Natural killer cell (primary cell): ENCODE measurements at regions of chr5 and their contacts with region 1.

Region 1: GRCh38 chr5:24351285-24351684 is 293.5 kb downstream of the CDH10 start:
- DNase-seq: no peak
- ATAC-seq: no peak
- H3K4me3 ChIP-seq: no peak overlapping the region
- H3K4me3 Mint-ChIP-seq: no peak overlapping the region
- H3K27ac ChIP-seq: no peak overlapping the region
- H3K27ac Mint-ChIP-seq: no peak overlapping the region
- H3K4me1 ChIP-seq: no peaks in the 10 kb centered on the region
- H3K4me1 Mint-ChIP-seq: no peaks in the 10 kb centered on the region
- H3K27me3 ChIP-seq: no peaks in the 10 kb centered on the region
- H3K27me3 Mint-ChIP-seq: no peaks in the 10 kb centered on the region
- CTCF ChIP-seq: no peak

Region 2: GRCh38 chr5:24368116-24368515 is 16.8 kb after region 1 on chr5:
- intact Hi-C with region 1: no loop called
- DNase-seq: no peak
- ATAC-seq: no peak
- H3K4me3 ChIP-seq: no peak overlapping the region
- H3K4me3 Mint-ChIP-seq: no peak overlapping the region
- H3K27ac ChIP-seq: no peak overlapping the region
- H3K27ac Mint-ChIP-seq: no peak overlapping the region
- H3K4me1 ChIP-seq: no peaks in the 10 kb centered on the region
- H3K4me1 Mint-ChIP-seq: no peaks in the 10 kb centered on the region
- H3K27me3 ChIP-seq: no peaks in the 10 kb centered on the region
- H3K27me3 Mint-ChIP-seq: no peaks in the 10 kb centered on the region
- CTCF ChIP-seq: no peak

Region 3: GRCh38 chr5:24385070-24385469 is 33.8 kb after region 1 on chr5:
- intact Hi-C with region 1: loop called (anchors 2 kb)
- DNase-seq: no peak
- ATAC-seq: no peak
- H3K4me3 ChIP-seq: no peak overlapping the region
- H3K4me3 Mint-ChIP-seq: no peak overlapping the region
- H3K27ac ChIP-seq: no peak overlapping the region
- H3K27ac Mint-ChIP-seq: no peak overlapping the region
- H3K4me1 ChIP-seq: no peaks in the 10 kb centered on the region
- H3K4me1 Mint-ChIP-seq: no peaks in the 10 kb centered on the region
- H3K27me3 ChIP-seq: no peaks in the 10 kb centered on the region
- H3K27me3 Mint-ChIP-seq: no peaks in the 10 kb centered on the region
- CTCF ChIP-seq: no peak